CD4-positive, alpha-beta T cell (primary cell): ENCODE measurements at regions of chr1 and their contacts with region 1.

Region 1: DNA sequence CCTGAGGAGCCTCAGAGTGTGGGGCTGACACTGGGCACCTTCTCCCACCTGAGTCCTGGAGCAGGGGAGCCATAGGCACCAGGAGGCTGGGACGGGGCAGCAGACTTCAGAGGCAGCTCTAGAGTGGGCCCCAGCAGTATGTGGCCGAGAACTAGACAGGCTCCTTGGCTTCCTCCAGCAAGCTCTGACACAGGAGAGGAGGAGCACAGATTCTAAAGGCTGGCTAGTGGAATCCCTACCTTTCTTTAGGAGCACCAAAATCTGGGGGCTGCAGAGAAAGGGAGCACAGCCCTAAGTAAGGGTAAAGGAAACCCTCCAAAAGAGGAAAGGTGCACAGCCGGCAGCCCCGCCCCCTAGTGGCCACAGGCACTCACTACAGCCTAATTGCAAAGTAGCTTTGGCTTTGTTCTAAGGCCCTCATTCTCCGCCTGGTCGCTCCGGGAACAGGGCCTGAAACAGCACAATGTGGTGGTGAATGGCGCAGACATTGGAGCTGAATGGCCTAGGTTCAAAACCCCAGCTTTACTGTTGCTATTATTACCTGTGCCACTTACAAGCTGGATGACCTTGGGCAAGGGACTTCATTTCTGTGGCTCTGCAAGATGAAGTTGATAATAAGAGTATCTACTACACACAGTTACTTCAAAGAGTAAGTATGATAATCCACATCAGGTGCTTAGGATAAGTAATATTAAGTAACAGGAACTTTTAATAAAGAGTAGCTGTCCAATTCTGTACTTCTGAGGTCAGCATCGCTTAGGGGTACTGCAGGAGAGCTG is 8.8 kb upstream of the GUCA2A start:
- DNase-seq: peak; percentile 46 to 78 (median 60)
- ATAC-seq: peak; percentile 77
- H3K4me3 ChIP-seq: no peak overlapping the region
- H3K4me3 Mint-ChIP-seq: no peak overlapping the region
- H3K27ac ChIP-seq: no peak overlapping the region
- H3K27ac Mint-ChIP-seq: no peak overlapping the region
- H3K4me1 ChIP-seq: peaks cover 5% of the 10 kb centered on the region
- H3K4me1 Mint-ChIP-seq: no peaks in the 10 kb centered on the region
- H3K27me3 ChIP-seq: no peaks in the 10 kb centered on the region
- H3K27me3 Mint-ChIP-seq: no peaks in the 10 kb centered on the region
- CTCF ChIP-seq: peak; percentile 97

Region 2: DNA sequence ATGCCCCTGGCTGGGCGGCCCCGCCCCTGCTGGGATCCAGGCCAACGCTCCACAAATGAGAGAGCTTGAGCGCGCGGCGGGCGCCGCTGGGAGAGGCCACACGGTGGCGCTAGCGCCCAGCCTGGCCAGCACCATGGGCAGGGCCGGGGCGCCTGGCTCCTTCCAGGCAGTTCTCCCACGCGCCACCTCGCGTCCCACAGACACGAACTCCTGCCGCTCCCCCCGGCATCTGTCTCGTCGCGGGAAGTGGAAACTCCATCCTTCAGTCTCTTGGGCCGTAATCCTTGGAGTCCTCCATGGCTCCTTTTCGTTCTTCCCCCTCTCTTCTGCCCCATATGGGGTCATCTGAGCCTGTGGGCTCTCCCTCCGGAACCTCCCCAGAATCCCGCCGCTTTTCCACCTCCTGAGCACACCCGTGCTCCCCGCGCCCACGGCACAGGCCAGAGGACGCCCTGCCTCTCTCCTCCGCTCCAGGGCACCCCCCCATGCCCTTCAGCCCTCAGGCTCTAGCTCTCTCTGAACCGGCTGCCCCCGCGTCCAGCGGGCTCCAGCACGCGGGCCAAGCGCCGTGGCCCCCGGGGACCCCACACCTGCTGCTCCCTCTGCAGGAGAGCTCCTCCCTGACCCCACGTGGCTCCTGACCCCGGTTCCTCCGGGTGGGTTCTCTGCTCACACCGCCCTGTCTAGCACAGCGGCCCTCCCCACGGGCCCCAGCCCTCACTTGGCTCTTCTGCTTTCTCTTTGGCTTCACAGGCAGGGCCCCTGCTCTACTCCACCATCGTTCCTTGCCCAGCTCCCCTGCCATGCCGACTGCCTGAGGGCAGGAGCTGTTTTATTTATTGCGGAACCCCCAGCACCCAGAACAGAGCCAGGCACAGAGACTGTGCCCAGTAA is 656.9 kb before region 1 on chr1:
- CTCF ChIA-PET with region 1: interaction called, 5 read pairs
- POLR2A ChIA-PET with region 1: interaction called, 3 read pairs
- intact Hi-C with region 1: loop called in 1 of 2 experiments (anchors 5 kb)
- DNase-seq: peak; percentile 28 to 75 (median 45)
- ATAC-seq: peak; percentile 92
- H3K4me3 ChIP-seq: no peak overlapping the region
- H3K4me3 Mint-ChIP-seq: no peak overlapping the region
- H3K27ac ChIP-seq: no peak overlapping the region
- H3K27ac Mint-ChIP-seq: no peak overlapping the region
- H3K4me1 ChIP-seq: peaks cover 8% of the 10 kb centered on the region
- H3K4me1 Mint-ChIP-seq: no peaks in the 10 kb centered on the region
- H3K27me3 ChIP-seq: no peaks in the 10 kb centered on the region
- H3K27me3 Mint-ChIP-seq: no peaks in the 10 kb centered on the region
- CTCF ChIP-seq: peak; percentile 78

Region 3: DNA sequence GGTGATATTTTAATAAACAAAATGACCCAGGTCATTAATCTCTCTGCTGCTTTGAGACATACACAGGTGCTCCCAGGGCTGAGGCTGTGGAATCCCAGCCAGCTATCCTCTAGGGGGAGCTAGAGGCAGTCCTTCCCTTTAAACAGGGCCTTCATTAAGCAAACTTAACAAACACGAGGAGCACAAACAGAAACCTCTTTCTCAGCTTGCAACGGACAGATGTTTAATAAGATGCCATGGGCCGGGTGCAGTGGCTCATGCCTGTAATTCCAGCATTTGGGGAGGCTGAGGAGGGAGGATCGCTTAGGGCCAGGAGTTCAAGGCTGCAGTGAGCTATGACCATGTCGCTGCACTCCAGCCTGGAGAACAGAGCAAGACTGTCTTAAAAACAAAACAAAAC is 361.3 kb before region 1 on chr1:
- CTCF ChIA-PET with region 1: interaction called, 6 read pairs
- POLR2A ChIA-PET with region 1: interaction called, 3 read pairs
- intact Hi-C with region 1: loop called (anchors 1 to 5 kb)
- DNase-seq: peak in 11 of 14 experiments; percentile 25 to 78 (median 33)
- ATAC-seq: peak; percentile 72
- H3K4me3 ChIP-seq: no peak overlapping the region
- H3K4me3 Mint-ChIP-seq: no peak overlapping the region
- H3K27ac ChIP-seq: no peak overlapping the region
- H3K27ac Mint-ChIP-seq: no peak overlapping the region
- H3K4me1 ChIP-seq: peaks cover 32% of the 10 kb centered on the region
- H3K4me1 Mint-ChIP-seq: peaks cover 32% of the 10 kb centered on the region
- H3K27me3 ChIP-seq: no peaks in the 10 kb centered on the region
- H3K27me3 Mint-ChIP-seq: no peaks in the 10 kb centered on the region
- CTCF ChIP-seq: peak; percentile 55

Region 4: DNA sequence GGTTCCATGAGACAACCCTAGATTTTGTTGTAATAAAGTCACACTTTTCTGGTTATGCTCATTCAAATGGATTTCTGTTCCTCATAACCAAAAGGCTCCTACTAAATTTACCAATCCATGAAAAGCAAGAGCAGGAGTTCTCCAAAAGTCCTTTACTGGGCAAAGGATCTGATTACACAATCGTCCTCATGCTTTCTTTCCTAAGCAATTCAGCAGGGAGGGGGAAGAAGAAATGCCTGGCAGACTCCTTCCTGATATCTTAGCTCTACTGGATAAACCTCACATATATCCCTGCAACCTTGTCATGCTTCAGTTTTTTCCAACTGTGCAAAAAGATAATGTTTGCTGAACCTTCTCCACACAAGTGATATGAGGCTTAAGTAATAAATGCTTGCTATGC is 87.7 kb before region 1 on chr1:
- CTCF ChIA-PET with region 1: no interaction called
- POLR2A ChIA-PET with region 1: no interaction called
- intact Hi-C with region 1: no loop called
- DNase-seq: no peak
- ATAC-seq: no peak
- H3K4me3 ChIP-seq: no peak overlapping the region
- H3K4me3 Mint-ChIP-seq: no peak overlapping the region
- H3K27ac ChIP-seq: no peak overlapping the region
- H3K27ac Mint-ChIP-seq: no peak overlapping the region
- H3K4me1 ChIP-seq: no peaks in the 10 kb centered on the region
- H3K4me1 Mint-ChIP-seq: no peaks in the 10 kb centered on the region
- H3K27me3 ChIP-seq: peaks cover 4 to 6% of the 10 kb centered on the region in 2 experiments
- H3K27me3 Mint-ChIP-seq: peaks cover 33% of the 10 kb centered on the region
- CTCF ChIP-seq: no peak

Region 5: DNA sequence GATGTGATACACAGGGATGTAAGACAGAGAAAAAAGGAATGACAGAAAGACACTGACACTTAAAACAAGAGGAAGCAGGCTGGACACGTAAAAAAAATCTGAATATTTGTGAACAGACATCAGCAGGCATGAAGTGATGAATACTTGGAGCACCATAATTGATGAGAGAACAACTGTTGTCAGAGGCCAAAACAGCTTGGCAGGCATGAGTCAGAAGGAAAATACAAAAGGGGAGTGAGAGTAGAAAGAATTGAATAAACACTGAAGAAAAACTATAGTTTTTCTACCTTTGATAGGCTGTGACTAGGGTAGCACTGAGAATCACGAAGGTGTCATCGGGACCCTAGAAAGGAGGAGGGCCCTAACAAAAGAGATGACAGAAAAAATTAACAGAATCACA is 12.8 kb after region 1 on chr1:
- CTCF ChIA-PET with region 1: interaction called, 15 read pairs
- POLR2A ChIA-PET with region 1: interaction called, 3 read pairs
- intact Hi-C with region 1: no loop called
- DNase-seq: no peak
- ATAC-seq: no peak
- H3K4me3 ChIP-seq: no peak overlapping the region
- H3K4me3 Mint-ChIP-seq: no peak overlapping the region
- H3K27ac ChIP-seq: no peak overlapping the region
- H3K27ac Mint-ChIP-seq: no peak overlapping the region
- H3K4me1 ChIP-seq: no peaks in the 10 kb centered on the region
- H3K4me1 Mint-ChIP-seq: no peaks in the 10 kb centered on the region
- H3K27me3 ChIP-seq: no peaks in the 10 kb centered on the region
- H3K27me3 Mint-ChIP-seq: no peaks in the 10 kb centered on the region
- CTCF ChIP-seq: no peak

Region 6: DNA sequence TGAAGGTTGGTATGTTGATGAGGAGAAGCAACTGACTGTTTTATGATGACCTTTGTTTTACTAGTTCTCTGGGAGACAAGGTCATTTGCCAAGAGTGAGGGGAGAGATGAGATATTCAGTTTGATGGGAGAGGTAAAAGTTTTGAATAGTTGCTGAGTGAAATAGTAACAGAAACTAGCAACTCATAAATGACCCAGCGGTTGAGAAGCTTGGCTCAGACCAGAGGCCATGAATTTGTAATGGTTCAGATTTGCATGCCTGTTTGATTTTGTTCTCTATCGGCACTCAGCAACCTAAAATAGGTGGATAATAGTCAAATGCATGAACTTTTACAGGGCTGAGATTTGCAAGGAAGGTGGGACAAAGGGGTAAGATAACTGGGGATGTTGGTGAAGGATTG is 296.4 kb after region 1 on chr1:
- CTCF ChIA-PET with region 1: no interaction called
- POLR2A ChIA-PET with region 1: no interaction called
- intact Hi-C with region 1: no loop called
- DNase-seq: no peak
- ATAC-seq: no peak
- H3K4me3 ChIP-seq: no peak overlapping the region
- H3K4me3 Mint-ChIP-seq: no peak overlapping the region
- H3K27ac ChIP-seq: no peak overlapping the region
- H3K27ac Mint-ChIP-seq: no peak overlapping the region
- H3K4me1 ChIP-seq: no peaks in the 10 kb centered on the region
- H3K4me1 Mint-ChIP-seq: no peaks in the 10 kb centered on the region
- H3K27me3 ChIP-seq: no peaks in the 10 kb centered on the region
- H3K27me3 Mint-ChIP-seq: peaks cover 4% of the 10 kb centered on the region
- CTCF ChIP-seq: no peak

Region 7: DNA sequence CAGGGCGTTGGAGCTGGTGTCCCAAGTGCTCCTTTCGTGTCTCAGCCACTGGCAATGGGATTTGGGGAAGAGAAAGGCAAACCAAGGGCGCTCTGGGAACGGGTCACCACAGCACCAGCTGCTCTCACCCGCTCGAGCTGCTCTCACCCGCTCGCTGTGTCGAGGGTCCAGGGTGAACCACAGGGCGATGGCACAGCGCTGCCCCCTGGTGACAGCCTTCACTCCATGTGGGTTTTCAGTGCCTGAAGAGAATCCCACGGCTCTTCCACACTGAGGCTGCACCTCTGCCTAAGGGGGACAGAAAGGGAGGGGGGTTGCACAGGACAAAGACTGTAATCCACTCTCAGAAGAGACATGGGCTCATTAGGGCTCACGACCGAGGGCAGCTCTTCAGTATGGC is 573.8 kb after region 1 on chr1:
- CTCF ChIA-PET with region 1: no interaction called
- POLR2A ChIA-PET with region 1: no interaction called
- intact Hi-C with region 1: loop called in 1 of 2 experiments (anchors 2 kb)
- DNase-seq: peak in 13 of 14 experiments; percentile 15 to 68 (median 41)
- ATAC-seq: peak; percentile 48
- H3K4me3 ChIP-seq: no peak overlapping the region
- H3K4me3 Mint-ChIP-seq: no peak overlapping the region
- H3K27ac ChIP-seq: no peak overlapping the region
- H3K27ac Mint-ChIP-seq: no peak overlapping the region
- H3K4me1 ChIP-seq: no peaks in the 10 kb centered on the region
- H3K4me1 Mint-ChIP-seq: no peaks in the 10 kb centered on the region
- H3K27me3 ChIP-seq: no peaks in the 10 kb centered on the region
- H3K27me3 Mint-ChIP-seq: no peaks in the 10 kb centered on the region
- CTCF ChIP-seq: peak; percentile 69